CD4-positive, alpha-beta memory T cell (primary cell): ENCODE measurements at regions of chr2 and their contacts with region 1.

Region 1: DNA sequence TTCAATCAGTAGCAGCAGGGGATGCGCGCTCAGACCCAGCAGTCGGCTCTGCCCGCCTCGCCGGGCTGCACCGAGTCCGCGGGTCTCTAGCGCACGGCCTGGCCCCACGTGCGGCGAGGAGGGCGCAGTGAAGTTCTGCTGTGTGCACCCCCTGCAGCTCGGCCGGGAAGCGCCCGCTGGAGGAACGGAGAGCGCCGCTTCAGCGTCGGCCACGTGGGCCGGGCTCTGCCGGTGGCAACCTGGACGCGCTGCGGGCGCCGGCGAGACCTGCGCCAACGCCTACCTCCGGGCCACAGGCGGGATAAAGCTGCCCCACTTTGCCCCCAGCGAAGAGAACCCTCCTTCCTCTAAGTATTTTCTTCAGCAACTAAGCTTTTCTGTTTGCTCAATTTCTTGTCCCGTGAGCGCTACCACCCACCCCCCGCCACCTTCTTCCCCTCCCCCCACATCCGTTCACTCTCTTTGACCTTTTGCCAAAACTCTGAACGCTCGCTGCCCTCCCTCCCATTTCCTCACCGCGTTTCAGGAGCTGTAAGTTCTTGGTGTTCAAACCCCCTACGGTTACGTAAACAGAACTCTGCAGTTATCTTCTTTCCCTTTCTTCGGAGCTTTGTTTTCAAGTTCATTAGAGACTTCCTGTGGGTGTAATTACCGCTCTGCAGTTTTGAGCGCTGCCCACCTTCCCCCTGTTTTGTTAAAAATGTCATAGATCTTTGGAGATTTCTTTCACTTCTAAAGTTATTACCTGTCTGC is 42.6 kb upstream of the EDAR start:
- DNase-seq: peak; percentile 86 to 92 (median 92)
- H3K4me3 ChIP-seq: peak overlapping the region; percentile 14 to 61
- H3K4me3 Mint-ChIP-seq: peak overlapping the region; percentile 74 to 87 (median 86)
- H3K27ac ChIP-seq: peak overlapping the region; percentile 49
- H3K27ac Mint-ChIP-seq: peak overlapping the region; percentile 85 to 95 (median 93)
- H3K4me1 ChIP-seq: peaks cover 71% of the 10 kb centered on the region
- H3K4me1 Mint-ChIP-seq: peaks cover 37 to 81% (median 60%) of the 10 kb centered on the region in 4 donors
- H3K27me3 ChIP-seq: no peaks in the 10 kb centered on the region
- H3K27me3 Mint-ChIP-seq: no peaks in the 10 kb centered on the region

Region 2: GRCh38 chr2:108621087-108621559 is 410.5 kb before region 1 on chr2:
- CTCF ChIA-PET with region 1: no interaction called
- POLR2A ChIA-PET with region 1: interaction called, 8 read pairs
- intact Hi-C with region 1: loop called (anchors 5 kb)
- DNase-seq: peak; percentile 79 to 92 (median 84)
- H3K4me3 ChIP-seq: peak overlapping the region; percentile 65 to 86
- H3K4me3 Mint-ChIP-seq: peak overlapping the region; percentile 91 to 97 (median 92)
- H3K27ac ChIP-seq: peak overlapping the region; percentile 69
- H3K27ac Mint-ChIP-seq: peak overlapping the region; percentile 91 to 98 (median 96)
- H3K4me1 ChIP-seq: peaks cover 88% of the 10 kb centered on the region
- H3K4me1 Mint-ChIP-seq: peaks cover 52 to 86% (median 66%) of the 10 kb centered on the region in 4 donors
- H3K27me3 ChIP-seq: no peaks in the 10 kb centered on the region
- H3K27me3 Mint-ChIP-seq: no peaks in the 10 kb centered on the region

Region 3: GRCh38 chr2:108704871-108705270 is 326.8 kb before region 1 on chr2:
- CTCF ChIA-PET with region 1: no interaction called
- POLR2A ChIA-PET with region 1: no interaction called
- intact Hi-C with region 1: no loop called
- DNase-seq: no peak
- H3K4me3 ChIP-seq: no peak overlapping the region
- H3K4me3 Mint-ChIP-seq: no peak overlapping the region
- H3K27ac ChIP-seq: no peak overlapping the region
- H3K27ac Mint-ChIP-seq: no peak overlapping the region
- H3K4me1 ChIP-seq: no peaks in the 10 kb centered on the region
- H3K4me1 Mint-ChIP-seq: no peaks in the 10 kb centered on the region
- H3K27me3 ChIP-seq: no peaks in the 10 kb centered on the region
- H3K27me3 Mint-ChIP-seq: peaks cover 0 to 3% of the 10 kb centered on the region in 2 donors

Region 4: GRCh38 chr2:108927936-108928659 is 103.6 kb before region 1 on chr2:
- CTCF ChIA-PET with region 1: interaction called, 15 read pairs
- POLR2A ChIA-PET with region 1: interaction called, 3 read pairs
- intact Hi-C with region 1: loop called (anchors 1 kb)
- DNase-seq: peak in 4 of 5 donors; percentile 41 to 52 (median 46)
- H3K4me3 ChIP-seq: no peak overlapping the region
- H3K4me3 Mint-ChIP-seq: no peak overlapping the region
- H3K27ac ChIP-seq: no peak overlapping the region
- H3K27ac Mint-ChIP-seq: peak overlapping the region in 1 of 7 donors; percentile 2
- H3K4me1 ChIP-seq: peaks cover 7% of the 10 kb centered on the region
- H3K4me1 Mint-ChIP-seq: peaks cover 4 to 14% (median 7%) of the 10 kb centered on the region in 4 donors
- H3K27me3 ChIP-seq: no peaks in the 10 kb centered on the region
- H3K27me3 Mint-ChIP-seq: no peaks in the 10 kb centered on the region

Region 5: GRCh38 chr2:108998911-108999310 is 32.7 kb before region 1 on chr2:
- CTCF ChIA-PET with region 1: interaction called, 4 read pairs
- POLR2A ChIA-PET with region 1: interaction called, 17 read pairs
- intact Hi-C with region 1: no loop called
- DNase-seq: no peak
- H3K4me3 ChIP-seq: no peak overlapping the region
- H3K4me3 Mint-ChIP-seq: no peak overlapping the region
- H3K27ac ChIP-seq: no peak overlapping the region
- H3K27ac Mint-ChIP-seq: no peak overlapping the region
- H3K4me1 ChIP-seq: peaks cover 10% of the 10 kb centered on the region
- H3K4me1 Mint-ChIP-seq: peaks cover 7 to 14% (median 10%) of the 10 kb centered on the region in 4 donors
- H3K27me3 ChIP-seq: no peaks in the 10 kb centered on the region
- H3K27me3 Mint-ChIP-seq: peaks cover 0 to 3% of the 10 kb centered on the region in 2 donors

Region 6: DNA sequence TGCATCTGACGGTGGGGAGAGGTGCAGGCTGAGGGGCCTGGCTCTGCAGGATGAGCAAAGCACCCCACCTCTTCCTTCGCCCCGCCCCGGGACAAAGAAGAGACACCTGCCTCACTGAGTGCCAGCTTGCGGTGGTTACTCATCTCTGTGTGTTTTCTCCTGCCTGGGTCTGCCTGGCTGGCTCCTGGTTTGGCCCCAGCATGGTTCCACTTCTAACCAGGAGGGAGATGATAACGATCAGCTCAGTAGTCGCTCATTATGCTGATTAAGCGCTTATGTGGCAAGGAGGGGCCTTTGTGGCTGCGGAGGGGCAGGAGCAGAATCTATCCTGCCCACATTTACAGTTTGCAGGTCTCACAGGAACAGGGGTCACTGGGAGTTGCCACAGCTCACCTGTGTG is 26.0 kb after region 1 on chr2:
- CTCF ChIA-PET with region 1: interaction called, 4 read pairs
- POLR2A ChIA-PET with region 1: interaction called, 33 read pairs
- intact Hi-C with region 1: loop called (anchors 2 kb)
- DNase-seq: no peak
- H3K4me3 ChIP-seq: no peak overlapping the region
- H3K4me3 Mint-ChIP-seq: no peak overlapping the region
- H3K27ac ChIP-seq: no peak overlapping the region
- H3K27ac Mint-ChIP-seq: peak overlapping the region in 1 of 7 donors; percentile 3
- H3K4me1 ChIP-seq: no peaks in the 10 kb centered on the region
- H3K4me1 Mint-ChIP-seq: peaks cover 0 to 30% (median 4%) of the 10 kb centered on the region in 4 donors
- H3K27me3 ChIP-seq: no peaks in the 10 kb centered on the region
- H3K27me3 Mint-ChIP-seq: no peaks in the 10 kb centered on the region

Region 7: GRCh38 chr2:109128048-109128465 is 96.4 kb after region 1 on chr2:
- CTCF ChIA-PET with region 1: interaction called, 3 read pairs
- POLR2A ChIA-PET with region 1: interaction called, 19 read pairs
- intact Hi-C with region 1: loop called (anchors 1 kb)
- DNase-seq: peak; percentile 32 to 56 (median 54)
- H3K4me3 ChIP-seq: peak overlapping the region; percentile 11 to 63
- H3K4me3 Mint-ChIP-seq: peak overlapping the region; percentile 71 to 85 (median 80)
- H3K27ac ChIP-seq: no peak overlapping the region
- H3K27ac Mint-ChIP-seq: peak overlapping the region in 1 of 7 donors; percentile 12
- H3K4me1 ChIP-seq: peaks cover 15% of the 10 kb centered on the region
- H3K4me1 Mint-ChIP-seq: peaks cover 6 to 14% (median 10%) of the 10 kb centered on the region in 4 donors
- H3K27me3 ChIP-seq: peaks cover 5% of the 10 kb centered on the region
- H3K27me3 Mint-ChIP-seq: peaks cover 20 to 39% of the 10 kb centered on the region in 2 donors

Region 8: DNA sequence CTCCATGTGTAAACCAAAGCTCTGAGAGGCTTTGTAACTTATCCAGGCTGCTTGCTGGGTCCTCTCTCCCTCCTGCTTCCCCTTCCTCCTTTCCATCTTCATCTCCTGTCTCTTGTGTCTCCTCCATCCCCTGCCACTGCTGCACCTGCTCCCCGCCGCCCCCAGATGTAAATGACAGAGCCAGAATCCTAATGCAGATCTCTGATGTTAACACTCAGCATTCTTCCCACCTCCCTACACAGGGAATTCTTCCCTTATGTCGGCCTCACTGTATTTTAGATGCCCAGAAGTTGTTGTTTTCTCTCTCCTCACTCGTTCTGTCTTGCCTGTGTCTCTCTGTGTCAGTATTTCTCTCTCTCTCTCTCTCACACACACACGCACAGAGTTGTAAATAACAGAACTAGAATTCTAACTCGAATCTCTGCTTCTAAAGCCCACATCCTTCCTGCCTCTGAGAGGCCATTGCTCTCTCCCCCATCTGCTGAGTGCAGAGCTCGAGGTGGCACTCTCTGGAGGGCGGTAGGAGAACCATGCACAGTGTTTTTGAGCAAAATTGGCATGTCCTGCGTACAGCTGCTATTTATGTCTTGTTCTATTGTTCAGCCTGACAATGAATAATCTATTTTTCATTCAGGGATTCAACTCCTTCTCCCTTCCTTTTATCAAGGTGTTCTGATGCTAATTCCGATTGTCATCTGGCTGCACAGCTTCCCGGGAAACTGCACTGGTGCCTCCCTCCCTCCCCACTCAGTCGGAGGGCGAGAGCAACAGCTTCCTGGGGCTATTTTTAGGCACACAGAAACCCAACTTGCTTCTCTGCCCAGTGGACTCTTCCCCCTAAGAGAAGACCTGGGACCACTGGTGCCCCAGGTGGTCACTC is 317.3 kb after region 1 on chr2:
- CTCF ChIA-PET with region 1: interaction called, 4 read pairs
- POLR2A ChIA-PET with region 1: interaction called, 12 read pairs
- intact Hi-C with region 1: no loop called
- DNase-seq: peak; percentile 56 to 74 (median 66)
- H3K4me3 ChIP-seq: peak overlapping the region in 1 of 2 donors; percentile 32
- H3K4me3 Mint-ChIP-seq: peak overlapping the region; percentile 41 to 77 (median 66)
- H3K27ac ChIP-seq: peak overlapping the region; percentile 2
- H3K27ac Mint-ChIP-seq: peak overlapping the region; percentile 22 to 89 (median 83)
- H3K4me1 ChIP-seq: peaks cover 44% of the 10 kb centered on the region
- H3K4me1 Mint-ChIP-seq: peaks cover 17 to 48% (median 34%) of the 10 kb centered on the region in 4 donors
- H3K27me3 ChIP-seq: no peaks in the 10 kb centered on the region
- H3K27me3 Mint-ChIP-seq: no peaks in the 10 kb centered on the region